ENCODE measurements at regions of chr20 and their contacts with region 1.

Region 1: DNA sequence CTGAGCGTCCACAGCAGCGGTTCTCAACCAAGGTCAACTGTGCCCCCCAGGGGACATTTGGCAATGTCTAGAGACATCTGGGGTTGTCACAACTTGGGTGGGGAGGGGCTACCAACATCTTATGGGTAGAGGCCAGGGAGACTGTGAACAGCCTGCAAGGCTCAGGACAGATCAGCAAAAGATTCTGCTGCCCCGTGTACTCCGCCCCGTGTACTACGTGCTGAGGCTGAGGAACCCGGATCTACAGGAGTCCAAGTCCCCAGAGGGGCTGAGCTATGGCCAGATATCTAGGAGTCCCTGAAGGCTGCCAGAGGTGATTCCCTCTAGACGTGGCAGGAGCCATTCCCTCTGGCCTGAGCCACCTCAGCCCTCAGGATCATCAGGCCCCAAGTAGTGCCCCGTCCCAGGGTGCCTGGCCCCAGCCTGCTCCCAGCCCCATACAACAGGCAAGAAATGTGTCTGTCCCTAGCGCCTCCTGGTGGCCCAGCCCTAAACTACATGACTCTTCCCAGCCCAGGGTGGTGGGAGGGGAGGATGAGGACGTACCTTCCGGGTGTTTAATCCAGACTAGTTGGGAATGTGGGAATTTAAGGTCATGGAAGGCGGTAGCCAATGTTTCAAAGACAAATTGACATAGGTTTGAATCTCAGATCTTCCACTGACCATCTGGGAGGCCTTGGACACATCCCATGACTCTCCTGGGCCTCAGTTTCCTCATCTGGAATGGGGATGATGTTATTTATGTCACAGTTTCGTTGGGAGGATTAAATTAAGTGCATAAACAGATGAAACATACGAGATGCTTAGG is 49.5 kb upstream of the PTPN1 start:
- DNase-seq: peak; percentile 72
- H3K4me3 Mint-ChIP-seq: no peak overlapping the region
- H3K27ac Mint-ChIP-seq: no peak overlapping the region
- H3K4me1 Mint-ChIP-seq: peaks cover 7% of the 10 kb centered on the region
- H3K27me3 Mint-ChIP-seq: no peaks in the 10 kb centered on the region

Region 2: DNA sequence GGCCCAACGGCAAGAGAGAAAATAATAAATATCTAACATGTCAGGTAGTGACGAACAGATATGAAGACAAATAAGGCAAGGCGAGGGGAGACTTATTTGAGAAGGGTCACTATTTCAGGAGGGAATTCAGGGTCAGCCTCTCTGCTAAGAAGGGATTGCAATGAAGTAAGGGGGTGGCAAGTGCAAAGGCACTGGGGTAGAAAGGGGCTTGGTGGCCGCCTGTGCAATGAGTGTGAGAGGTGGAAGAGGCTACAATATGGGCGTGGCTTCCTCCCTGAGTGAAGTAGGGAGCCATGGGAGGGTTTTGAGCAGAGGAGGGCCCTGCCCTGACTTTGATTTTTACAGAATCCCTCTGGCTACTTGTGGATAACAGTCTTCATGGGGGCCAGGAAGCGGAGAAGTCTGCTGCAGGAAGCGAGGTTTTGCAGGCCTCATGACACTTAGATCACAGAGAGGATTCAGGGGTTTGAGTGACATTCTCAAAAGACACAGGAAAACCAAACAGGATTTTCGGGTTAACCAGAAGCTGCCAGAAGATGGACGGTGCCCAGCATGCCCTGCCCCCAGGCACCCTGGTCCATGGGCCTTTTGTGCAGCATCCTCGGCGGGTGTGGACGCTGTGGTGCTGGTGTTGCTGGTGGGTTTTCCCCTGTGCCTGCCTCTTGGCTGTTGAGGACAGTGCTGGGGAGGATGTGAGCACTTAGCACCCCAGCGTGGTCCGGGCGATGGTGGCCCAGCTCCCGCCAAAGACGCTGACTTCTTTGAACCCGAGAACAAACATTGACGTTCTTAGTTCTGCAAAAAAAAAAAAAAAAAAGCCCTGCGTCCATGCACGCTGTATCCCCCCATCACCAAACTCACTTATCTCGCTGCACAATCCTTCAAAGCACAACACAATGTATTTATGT is 74.7 kb before region 1 on chr20:
- intact Hi-C with region 1: loop called (anchors 5 kb)
- DNase-seq: peak; percentile 65
- H3K4me3 Mint-ChIP-seq: peak overlapping the region; percentile 52
- H3K27ac Mint-ChIP-seq: peak overlapping the region; percentile 72
- H3K4me1 Mint-ChIP-seq: peaks cover 66% of the 10 kb centered on the region
- H3K27me3 Mint-ChIP-seq: peaks cover 5% of the 10 kb centered on the region

Region 3: GRCh38 chr20:50790651-50791277 is 330.1 kb after region 1 on chr20:
- intact Hi-C with region 1: no loop called
- DNase-seq: peak; percentile 75
- H3K4me3 Mint-ChIP-seq: no peak overlapping the region
- H3K27ac Mint-ChIP-seq: peak overlapping the region; percentile 46
- H3K4me1 Mint-ChIP-seq: peaks cover 11% of the 10 kb centered on the region
- H3K27me3 Mint-ChIP-seq: no peaks in the 10 kb centered on the region

Region 4: GRCh38 chr20:51595058-51595532 is 1134.4 kb after region 1 on chr20:
- intact Hi-C with region 1: no loop called
- DNase-seq: peak; percentile 72
- H3K4me3 Mint-ChIP-seq: peak overlapping the region; percentile 17
- H3K27ac Mint-ChIP-seq: peak overlapping the region; percentile 65
- H3K4me1 Mint-ChIP-seq: peaks cover 46% of the 10 kb centered on the region
- H3K27me3 Mint-ChIP-seq: no peaks in the 10 kb centered on the region

Measured in activated T-helper 2 cell treated with anti-CD3 and anti-CD28 coated beads, Interferon-gamma antibody, Interleukin-2, Interleukin-4, amounts not matched to agents 10 μg/mL and 5 μg/mL and 100 μg/mL, durations not matched to agents 14 hours and 24 hours and 36 hours (primary cell).